ENCODE measurements at regions of chr11 and their contacts with region 1.

Region 1: GRCh38 chr11:45110562-45110961 is 35.9 kb upstream of the PRDM11 start:
- DNase-seq: peak; percentile 67 to 83 (median 74)
- H3K4me3 ChIP-seq: no peak overlapping the region
- H3K27ac ChIP-seq: no peak overlapping the region
- H3K4me1 ChIP-seq: peaks cover 0 to 6% (median 0%) of the 10 kb centered on the region in 4 experiments
- H3K27me3 ChIP-seq: peaks cover 0 to 3% (median 0%) of the 10 kb centered on the region in 5 experiments

Region 2: DNA sequence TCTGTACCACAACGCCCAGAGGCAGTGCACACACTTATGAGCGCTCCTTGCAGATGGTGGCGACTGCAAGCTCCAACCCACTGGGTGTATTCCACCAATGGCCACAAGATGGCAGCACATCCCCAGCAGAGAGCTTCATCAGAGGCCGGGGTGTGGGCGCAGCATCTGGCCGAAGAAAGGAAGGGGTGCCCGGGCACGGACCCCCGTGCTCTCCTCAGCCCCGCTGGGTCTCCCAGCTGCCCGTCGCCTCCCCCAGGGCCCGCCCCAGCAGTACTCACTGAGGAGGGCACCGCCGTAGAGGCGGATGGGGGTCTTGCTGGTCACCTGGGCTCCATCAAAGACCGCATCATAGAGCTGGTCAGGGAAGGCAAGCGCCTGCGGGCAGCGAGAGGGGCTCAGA is 174.0 kb before region 1 on chr11:
- CTCF ChIA-PET with region 1: interaction called, 1,197 read pairs
- POLR2A ChIA-PET with region 1: interaction called, 7 read pairs
- DNase-seq: peak; percentile 79 to 90 (median 83)
- H3K4me3 ChIP-seq: no peak overlapping the region
- H3K27ac ChIP-seq: no peak overlapping the region
- H3K4me1 ChIP-seq: peaks cover 0 to 20% (median 13%) of the 10 kb centered on the region in 4 experiments
- H3K27me3 ChIP-seq: no peaks in the 10 kb centered on the region

Region 3: DNA sequence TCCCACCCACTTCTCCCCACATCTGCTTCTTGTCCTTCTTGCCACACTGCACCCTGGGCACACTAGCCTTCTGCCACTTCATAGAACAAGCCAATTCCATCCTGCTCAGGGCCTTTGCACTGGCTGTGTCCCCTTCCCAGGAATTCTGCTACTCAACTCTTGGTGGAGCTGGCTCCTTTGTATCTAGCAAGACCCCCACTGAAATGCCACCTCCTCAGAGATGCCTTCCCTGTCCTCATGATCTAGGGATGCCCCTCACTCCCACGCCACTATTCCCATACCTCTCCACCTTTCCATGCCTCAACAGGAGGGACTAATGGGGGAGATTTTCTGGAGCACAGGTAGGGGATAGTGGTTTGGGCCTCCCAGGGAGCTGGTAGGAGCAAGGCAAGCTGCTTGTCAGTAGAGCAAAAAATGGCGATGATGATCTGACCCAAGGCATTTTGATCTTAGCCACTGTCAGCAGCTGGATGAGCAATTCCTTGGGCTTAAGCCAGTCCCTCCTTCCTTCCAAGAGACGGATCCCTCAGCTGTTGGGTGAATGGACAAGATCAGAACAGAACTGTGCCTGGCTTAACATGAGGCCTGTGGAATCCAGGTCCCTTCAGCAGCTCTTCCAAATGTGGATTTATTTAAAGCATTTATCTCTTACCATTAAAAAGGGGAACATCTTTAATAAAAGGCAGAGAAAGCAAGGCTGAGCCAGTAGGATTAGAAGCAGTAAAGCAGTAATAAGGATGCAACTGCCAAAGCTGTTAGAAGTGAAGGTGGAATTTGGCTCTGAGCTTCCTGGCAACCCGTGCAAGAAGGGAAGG is 31.9 kb after region 1 on chr11:
- CTCF ChIA-PET with region 1: interaction called, 11 read pairs
- POLR2A ChIA-PET with region 1: no interaction called
- DNase-seq: no peak
- H3K4me3 ChIP-seq: no peak overlapping the region
- H3K27ac ChIP-seq: no peak overlapping the region
- H3K4me1 ChIP-seq: peaks cover 5 to 17% (median 13%) of the 10 kb centered on the region in 4 experiments
- H3K27me3 ChIP-seq: peaks cover 0 to 10% (median 6%) of the 10 kb centered on the region in 5 experiments

Region 4: DNA sequence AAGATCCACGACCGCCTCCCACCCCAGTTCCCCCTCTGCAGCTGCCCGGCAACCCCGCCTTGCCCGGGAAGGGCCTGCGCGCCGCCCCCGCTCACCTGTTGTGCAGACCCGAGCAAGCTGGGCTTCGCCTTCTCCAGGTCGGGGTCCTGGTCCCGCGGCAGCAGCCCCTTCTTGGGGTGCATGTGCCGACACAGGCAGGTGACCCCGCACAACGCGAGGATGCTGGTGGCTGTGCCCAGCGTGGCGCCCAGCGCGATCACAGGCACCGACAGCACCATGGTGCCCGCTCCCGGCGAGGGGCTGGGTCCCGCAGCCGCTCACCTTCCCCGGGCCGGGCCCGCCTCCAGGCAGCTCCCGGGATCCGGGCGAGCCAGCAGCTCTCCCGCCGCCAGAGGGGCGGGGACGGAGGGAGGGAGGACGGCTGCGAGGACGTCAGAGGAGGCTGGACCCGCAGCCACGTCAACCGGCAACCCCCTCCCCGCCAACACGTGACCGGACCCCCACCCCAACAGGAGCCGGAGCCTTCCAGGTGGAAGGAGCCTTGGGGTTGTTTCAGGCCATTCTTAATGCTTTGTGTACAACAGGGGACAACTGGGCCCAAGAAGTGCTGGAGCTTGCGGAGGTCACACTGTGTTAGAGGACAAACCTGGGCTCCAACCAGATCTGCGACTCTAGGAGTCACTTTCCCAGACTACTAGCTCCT is 175.5 kb after region 1 on chr11 and contains the start of gene SYT13:
- CTCF ChIA-PET with region 1: interaction called, 25 read pairs
- POLR2A ChIA-PET with region 1: no interaction called
- DNase-seq: no peak
- H3K4me3 ChIP-seq: peak within 1 kb of the TSS in 4 of 7 experiments; percentile 5 to 57 (median 38)
- H3K27ac ChIP-seq: no peak within 1 kb of the TSS
- H3K4me1 ChIP-seq: peaks cover 0 to 12% (median 3%) of the 10 kb centered on the region in 4 experiments
- H3K27me3 ChIP-seq: peaks cover 12 to 67% (median 36%) of the 10 kb centered on the region in 5 experiments

Region 5: DNA sequence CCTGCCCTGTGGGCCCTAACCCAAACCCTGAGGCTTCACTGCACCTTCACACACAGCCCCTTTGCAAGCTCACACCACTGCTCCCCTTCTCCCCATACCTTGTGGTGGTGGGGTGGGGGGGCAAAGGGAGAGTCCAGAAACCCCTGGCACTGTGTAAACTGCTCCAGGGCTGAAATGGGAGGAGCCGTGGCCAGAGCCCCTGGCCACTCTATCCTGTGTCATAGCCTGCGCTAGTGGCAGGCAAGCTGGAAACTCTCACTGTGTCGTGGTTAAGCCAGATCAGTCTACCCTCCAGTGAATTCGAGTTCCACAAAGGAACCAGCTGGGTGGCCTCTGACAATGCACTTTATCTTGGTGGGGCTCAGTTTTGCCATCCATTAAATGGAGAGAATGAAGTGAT is 183.9 kb after region 1 on chr11:
- CTCF ChIA-PET with region 1: interaction called, 25 read pairs
- POLR2A ChIA-PET with region 1: no interaction called
- DNase-seq: no peak
- H3K4me3 ChIP-seq: no peak overlapping the region
- H3K27ac ChIP-seq: no peak overlapping the region
- H3K4me1 ChIP-seq: peaks cover 0 to 4% (median 0%) of the 10 kb centered on the region in 4 experiments
- H3K27me3 ChIP-seq: peaks cover 0 to 12% (median 9%) of the 10 kb centered on the region in 5 experiments

Region 6: DNA sequence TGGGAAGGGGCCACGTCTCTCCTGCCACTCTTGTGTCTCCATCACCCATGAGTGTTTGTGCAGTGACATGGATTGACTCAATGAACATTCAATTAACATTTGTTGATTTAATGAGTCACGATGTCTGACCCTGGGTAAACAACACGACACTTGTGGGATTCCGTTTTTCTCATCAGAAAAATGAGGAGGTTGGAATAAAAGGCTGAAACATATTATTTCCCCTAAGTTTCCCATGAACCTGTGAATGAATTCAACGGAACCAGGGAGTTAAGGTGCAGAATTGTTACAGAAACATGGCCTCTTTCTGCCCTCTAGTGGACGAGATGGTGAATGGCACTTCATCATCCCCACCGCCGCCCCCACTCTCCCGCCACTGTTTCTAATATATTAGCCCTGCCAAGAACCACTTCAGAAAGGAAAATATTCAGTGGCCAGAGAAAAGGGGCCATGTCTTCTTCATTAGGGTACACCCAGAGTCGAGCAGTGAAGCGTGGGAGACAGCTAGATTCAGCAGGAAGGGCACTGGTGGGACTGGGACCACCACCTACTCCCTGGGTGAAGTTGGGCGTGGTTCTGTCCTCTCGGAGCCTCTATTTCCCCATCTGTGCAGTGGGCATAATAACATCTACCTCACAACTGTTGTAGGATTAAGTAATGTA is 221.8 kb after region 1 on chr11:
- CTCF ChIA-PET with region 1: interaction called, 97 read pairs
- POLR2A ChIA-PET with region 1: no interaction called
- DNase-seq: peak; percentile 34 to 56 (median 50)
- H3K4me3 ChIP-seq: no peak overlapping the region
- H3K27ac ChIP-seq: no peak overlapping the region
- H3K4me1 ChIP-seq: peaks cover 0 to 4% (median 0%) of the 10 kb centered on the region in 4 experiments
- H3K27me3 ChIP-seq: peaks cover 0 to 5% (median 0%) of the 10 kb centered on the region in 5 experiments